ENCODE measurements at regions of chr18 and their contacts with region 1.

Region 1: DNA sequence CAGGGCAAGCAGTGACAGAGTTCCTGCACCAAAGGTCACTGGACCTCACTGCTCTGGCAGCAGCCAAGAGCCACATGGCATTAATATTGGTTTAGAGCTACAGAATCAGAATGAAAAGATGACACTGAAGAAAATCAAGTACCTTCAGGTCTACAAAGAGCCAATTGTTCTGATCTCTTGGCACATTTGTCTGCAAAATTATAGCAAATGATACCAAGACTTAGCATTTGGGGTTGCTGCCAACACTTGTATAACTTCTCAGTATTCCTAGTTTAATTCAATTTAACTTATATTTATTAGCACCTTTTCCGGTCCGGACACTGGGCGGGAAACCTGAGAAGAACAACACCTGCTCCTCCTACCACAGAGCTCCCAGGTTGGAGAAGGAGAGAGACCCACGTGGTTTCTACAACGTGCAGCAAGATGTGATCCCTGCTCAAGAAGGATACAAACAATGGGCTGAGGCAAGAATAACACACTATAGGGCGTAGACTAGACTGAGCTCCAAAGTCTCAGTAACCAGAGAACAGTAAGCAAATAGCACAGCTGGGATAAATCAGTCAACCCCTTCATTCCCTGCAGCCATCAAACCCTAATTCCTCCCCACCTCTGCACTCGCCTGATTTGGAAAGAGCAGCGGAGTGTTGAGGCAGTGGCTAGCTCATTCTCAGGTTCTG is 2.4 kb downstream of the LRRC30 start:
- DNase-seq: no peak
- ATAC-seq: peak; percentile 32

Region 2: GRCh38 chr18:7248877-7249276 is 15.6 kb after region 1 on chr18:
- intact Hi-C with region 1: loop called (anchors 2 kb)
- DNase-seq: no peak
- ATAC-seq: no peak

Region 3: GRCh38 chr18:7256618-7257425 is 23.6 kb after region 1 on chr18:
- intact Hi-C with region 1: loop called (anchors 2 kb)
- DNase-seq: no peak
- ATAC-seq: no peak

Measured in Right ventricle myocardium inferior (tissue), 1 donor.